CD8-positive, alpha-beta memory T cell (primary cell): ENCODE measurements at regions of chr6 and their contacts with region 1.

Region 1: GRCh38 chr6:42390228-42390934 is 61.3 kb downstream of the TRERF1 start:
- DNase-seq: peak in 3 of 5 donors; percentile 74 to 82 (median 80)
- H3K4me3 ChIP-seq: peak overlapping the region; percentile 29
- H3K4me3 Mint-ChIP-seq: peak overlapping the region; percentile 66 to 88 (median 78)
- H3K27ac ChIP-seq: peak overlapping the region; percentile 67
- H3K27ac Mint-ChIP-seq: peak overlapping the region; percentile 93 to 99 (median 97)
- H3K4me1 ChIP-seq: peaks cover 98% of the 10 kb centered on the region
- H3K4me1 Mint-ChIP-seq: peaks cover 96 to 99% (median 98%) of the 10 kb centered on the region in 3 donors
- H3K27me3 ChIP-seq: no peaks in the 10 kb centered on the region
- H3K27me3 Mint-ChIP-seq: peaks cover 0 to 3% of the 10 kb centered on the region in 2 donors

Region 2: GRCh38 chr6:42367353-42368011 is 22.9 kb before region 1 on chr6:
- CTCF ChIA-PET with region 1: interaction called, 16 read pairs
- POLR2A ChIA-PET with region 1: interaction called, 22 read pairs
- DNase-seq: peak in 1 of 5 donors; percentile 32
- H3K4me3 ChIP-seq: peak overlapping the region; percentile 48
- H3K4me3 Mint-ChIP-seq: peak overlapping the region; percentile 57 to 90 (median 84)
- H3K27ac ChIP-seq: peak overlapping the region; percentile 55
- H3K27ac Mint-ChIP-seq: peak overlapping the region; percentile 85 to 100 (median 92)
- H3K4me1 ChIP-seq: peaks cover 69% of the 10 kb centered on the region
- H3K4me1 Mint-ChIP-seq: peaks cover 76 to 94% (median 82%) of the 10 kb centered on the region in 3 donors
- H3K27me3 ChIP-seq: no peaks in the 10 kb centered on the region
- H3K27me3 Mint-ChIP-seq: no peaks in the 10 kb centered on the region

Region 3: GRCh38 chr6:42374018-42374659 is 16.2 kb before region 1 on chr6:
- CTCF ChIA-PET with region 1: interaction called, 13 read pairs
- POLR2A ChIA-PET with region 1: interaction called, 22 read pairs
- DNase-seq: no peak
- H3K4me3 ChIP-seq: no peak overlapping the region
- H3K4me3 Mint-ChIP-seq: peak overlapping the region in 6 of 7 donors; percentile 56 to 78 (median 74)
- H3K27ac ChIP-seq: no peak overlapping the region
- H3K27ac Mint-ChIP-seq: peak overlapping the region; percentile 60 to 97 (median 92)
- H3K4me1 ChIP-seq: peaks cover 63% of the 10 kb centered on the region
- H3K4me1 Mint-ChIP-seq: peaks cover 60 to 80% (median 75%) of the 10 kb centered on the region in 3 donors
- H3K27me3 ChIP-seq: no peaks in the 10 kb centered on the region
- H3K27me3 Mint-ChIP-seq: no peaks in the 10 kb centered on the region

Region 4: DNA sequence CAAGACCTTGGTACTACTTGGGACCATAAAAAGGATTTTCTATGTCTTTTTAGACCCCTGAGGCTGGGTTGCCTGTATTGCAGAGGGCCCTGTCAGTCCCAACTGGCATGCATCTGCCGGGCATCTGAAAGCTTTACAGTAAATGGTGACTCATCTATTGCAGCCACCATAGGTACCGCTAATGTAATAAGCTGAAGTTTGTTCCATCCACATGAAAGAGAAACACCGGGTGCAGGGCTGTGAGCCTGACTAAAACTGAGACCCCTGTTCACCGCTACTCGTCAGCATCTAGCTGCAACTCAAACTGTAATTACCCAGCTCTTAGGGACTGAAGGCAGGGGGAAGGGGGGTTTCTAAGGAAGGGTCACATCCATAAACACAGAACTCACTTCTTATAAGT is 11.8 kb after region 1 on chr6:
- CTCF ChIA-PET with region 1: interaction called, 17 read pairs
- POLR2A ChIA-PET with region 1: interaction called, 60 read pairs
- DNase-seq: peak in 4 of 5 donors; percentile 10 to 75 (median 23)
- H3K4me3 ChIP-seq: no peak overlapping the region
- H3K4me3 Mint-ChIP-seq: peak overlapping the region; percentile 22 to 89 (median 74)
- H3K27ac ChIP-seq: no peak overlapping the region
- H3K27ac Mint-ChIP-seq: peak overlapping the region; percentile 66 to 98 (median 90)
- H3K4me1 ChIP-seq: peaks cover 56% of the 10 kb centered on the region
- H3K4me1 Mint-ChIP-seq: peaks cover 79 to 99% (median 98%) of the 10 kb centered on the region in 3 donors
- H3K27me3 ChIP-seq: no peaks in the 10 kb centered on the region
- H3K27me3 Mint-ChIP-seq: no peaks in the 10 kb centered on the region

Region 5: DNA sequence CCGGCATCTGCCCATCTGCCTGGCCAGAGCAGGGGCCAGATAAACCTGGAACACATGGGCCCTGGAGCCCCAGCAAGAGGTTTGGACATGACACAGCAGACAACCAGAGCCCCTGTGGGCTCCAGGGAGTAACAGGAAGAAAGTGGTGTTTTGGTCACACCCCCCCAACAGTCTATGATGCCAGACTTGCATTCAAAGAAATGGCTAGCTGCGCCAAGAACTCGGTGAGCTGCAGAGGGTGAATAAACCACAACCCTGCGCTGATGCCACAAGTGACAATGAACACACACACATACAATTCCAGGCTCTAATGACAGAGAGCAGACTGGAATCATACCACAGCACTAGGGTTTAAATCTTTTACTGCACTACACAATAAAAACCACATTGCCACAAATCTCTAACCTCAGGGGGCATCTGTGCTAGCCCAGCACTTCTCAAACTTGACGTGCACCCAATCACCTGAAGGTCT is 27.3 kb after region 1 on chr6:
- CTCF ChIA-PET with region 1: interaction called, 6 read pairs
- POLR2A ChIA-PET with region 1: interaction called, 13 read pairs
- DNase-seq: peak; percentile 32 to 82 (median 59)
- H3K4me3 ChIP-seq: no peak overlapping the region
- H3K4me3 Mint-ChIP-seq: peak overlapping the region; percentile 12 to 80 (median 75)
- H3K27ac ChIP-seq: no peak overlapping the region
- H3K27ac Mint-ChIP-seq: peak overlapping the region; percentile 51 to 97 (median 86)
- H3K4me1 ChIP-seq: peaks cover 26% of the 10 kb centered on the region
- H3K4me1 Mint-ChIP-seq: peaks cover 60 to 91% (median 83%) of the 10 kb centered on the region in 3 donors
- H3K27me3 ChIP-seq: no peaks in the 10 kb centered on the region
- H3K27me3 Mint-ChIP-seq: peaks cover 0 to 1% of the 10 kb centered on the region in 2 donors

Region 6: GRCh38 chr6:42453031-42453653 is 62.8 kb after region 1 on chr6:
- CTCF ChIA-PET with region 1: interaction called, 17 read pairs
- POLR2A ChIA-PET with region 1: interaction called, 50 read pairs
- DNase-seq: peak; percentile 64 to 85 (median 76)
- H3K4me3 ChIP-seq: peak overlapping the region; percentile 92
- H3K4me3 Mint-ChIP-seq: peak overlapping the region; percentile 86 to 100 (median 93)
- H3K27ac ChIP-seq: no peak overlapping the region
- H3K27ac Mint-ChIP-seq: peak overlapping the region in 2 of 8 donors; percentile 12 to 89
- H3K4me1 ChIP-seq: peaks cover 12% of the 10 kb centered on the region
- H3K4me1 Mint-ChIP-seq: peaks cover 31 to 42% (median 33%) of the 10 kb centered on the region in 3 donors
- H3K27me3 ChIP-seq: no peaks in the 10 kb centered on the region
- H3K27me3 Mint-ChIP-seq: no peaks in the 10 kb centered on the region